Dendritic cell treated with granulocyte-macrophage colony-stimulating factor and Interleukin-4, amounts not matched to agents 40 ng/mL and 50 ng/mL, for 4 days (primary cell): ENCODE measurements at regions of chr14 and their contacts with region 1.

Region 1: DNA sequence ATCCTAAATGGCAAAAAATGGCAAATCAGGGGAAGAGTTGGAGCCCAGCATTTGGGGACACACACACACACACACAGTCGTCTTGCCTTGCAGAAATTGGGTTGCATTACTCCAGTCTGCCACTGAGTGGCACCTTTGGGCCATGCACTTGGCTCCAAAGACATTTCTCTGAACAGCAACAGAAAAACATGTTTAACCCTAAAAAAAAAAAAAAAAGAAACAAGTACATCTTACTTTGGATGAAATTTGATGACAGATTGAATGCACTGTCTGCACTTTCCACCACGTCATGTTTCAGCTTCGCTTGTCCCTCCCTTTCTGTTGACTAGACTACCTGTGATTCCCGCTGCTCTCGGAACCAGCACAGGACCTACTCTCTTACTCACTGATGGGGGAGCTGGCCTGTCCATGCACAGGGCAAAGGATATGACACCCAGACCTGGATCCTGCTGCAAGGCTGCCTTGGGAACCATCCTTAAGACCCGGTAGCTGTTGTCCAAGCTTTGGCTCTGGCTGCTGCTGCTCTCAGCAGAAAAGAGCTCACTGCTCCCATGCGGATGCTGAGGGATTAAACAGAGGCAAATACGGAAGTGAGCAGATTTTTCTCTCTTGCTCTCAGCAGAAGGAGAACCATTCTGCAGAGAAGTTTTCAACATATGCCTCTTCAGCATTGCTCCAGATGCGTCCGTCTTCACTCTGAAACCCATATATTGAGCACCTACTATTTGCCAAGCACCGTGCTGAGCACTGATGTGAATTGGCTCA is 376.8 kb downstream of the DPF3 start:
- H3K4me3 Mint-ChIP-seq: no peak overlapping the region
- H3K27ac Mint-ChIP-seq: no peak overlapping the region
- H3K4me1 Mint-ChIP-seq: peaks cover 42% of the 10 kb centered on the region
- H3K27me3 Mint-ChIP-seq: peaks cover 27% of the 10 kb centered on the region

Region 2: GRCh38 chr14:72904840-72905561 is 387.9 kb after region 1 on chr14:
- intact Hi-C with region 1: loop called (anchors 1 kb)
- H3K4me3 Mint-ChIP-seq: no peak overlapping the region
- H3K27ac Mint-ChIP-seq: no peak overlapping the region
- H3K4me1 Mint-ChIP-seq: no peaks in the 10 kb centered on the region
- H3K27me3 Mint-ChIP-seq: peaks cover 38% of the 10 kb centered on the region

Region 3: GRCh38 chr14:72948481-72949138 is 431.5 kb after region 1 on chr14:
- intact Hi-C with region 1: loop called (anchors 1 kb)
- H3K4me3 Mint-ChIP-seq: no peak overlapping the region
- H3K27ac Mint-ChIP-seq: no peak overlapping the region
- H3K4me1 Mint-ChIP-seq: peaks cover 6% of the 10 kb centered on the region
- H3K27me3 Mint-ChIP-seq: no peaks in the 10 kb centered on the region